ENCODE measurements at regions of chr6 and their contacts with region 1.

Region 1: GRCh38 chr6:28080631-28081485 is 490 bp downstream of the ZNF165 start:
- DNase-seq: peak; percentile 97
- H3K4me3 ChIP-seq: peak overlapping the region; percentile 62 to 78 (median 71)
- H3K27ac ChIP-seq: peak overlapping the region; percentile 86 to 93 (median 91)
- H3K4me1 ChIP-seq: peaks cover 0 to 14% (median 9%) of the 10 kb centered on the region in 4 donors
- H3K27me3 ChIP-seq: no peaks in the 10 kb centered on the region
- CTCF ChIP-seq: no peak
- EP300 ChIP-seq: peak in 1 of 4 donors; percentile 43
- POLR2A ChIP-seq: peak in 1 of 2 donors; percentile 41

Region 2: DNA sequence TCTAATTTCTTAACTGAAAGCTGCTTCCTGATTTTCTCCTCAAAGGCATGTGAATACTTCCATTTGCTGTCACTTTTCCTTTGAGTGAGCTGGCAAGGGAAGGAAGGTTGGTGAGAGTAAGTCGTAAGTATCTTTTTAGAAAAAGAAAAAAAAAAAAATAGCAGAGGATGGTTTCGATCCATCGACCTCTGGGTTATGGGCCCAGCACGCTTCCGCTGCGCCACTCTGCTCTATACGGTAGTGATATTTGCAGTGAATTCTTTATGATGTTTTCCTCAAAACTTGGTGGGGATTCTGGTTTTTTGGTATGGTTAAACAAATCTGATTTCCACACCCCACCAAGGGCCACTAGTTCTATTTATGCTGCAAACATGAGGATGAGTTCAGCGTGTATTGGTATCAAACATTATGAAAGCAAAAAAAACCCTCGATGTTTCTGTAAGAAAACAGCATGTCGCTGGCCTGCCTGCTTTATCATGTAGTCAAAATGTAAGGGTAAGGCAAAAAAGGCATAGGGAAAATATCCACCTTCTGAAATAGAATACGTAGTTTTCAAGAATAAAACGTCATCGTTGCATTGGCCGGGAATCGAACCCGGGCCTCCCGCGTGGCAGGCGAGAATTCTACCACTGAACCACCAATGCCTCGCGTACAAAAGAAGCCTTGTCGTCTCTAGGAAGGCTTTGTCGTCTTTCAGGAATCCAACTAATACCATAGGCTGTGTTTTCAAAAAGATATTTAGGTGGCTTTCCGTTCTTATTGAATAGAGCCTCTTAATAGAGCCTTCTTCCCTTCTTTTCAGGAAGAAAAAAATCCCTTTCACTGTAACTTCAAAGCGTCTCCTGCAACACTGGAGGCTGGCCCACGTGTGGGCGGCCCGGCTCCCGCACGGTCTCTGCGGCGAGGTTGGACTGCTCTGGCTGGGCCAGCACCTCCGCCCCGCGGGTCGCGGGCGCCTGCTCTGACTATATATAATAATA is 178.2 kb before region 1 on chr6:
- intact Hi-C with region 1: loop called (anchors 10 kb)
- DNase-seq: peak; percentile 90
- H3K4me3 ChIP-seq: peak overlapping the region; percentile 45 to 57 (median 51)
- H3K27ac ChIP-seq: peak overlapping the region; percentile 83 to 87 (median 86)
- H3K4me1 ChIP-seq: peaks cover 0 to 4% (median 0%) of the 10 kb centered on the region in 4 donors
- H3K27me3 ChIP-seq: no peaks in the 10 kb centered on the region
- CTCF ChIP-seq: no peak
- EP300 ChIP-seq: no peak
- POLR2A ChIP-seq: no peak

Region 3: DNA sequence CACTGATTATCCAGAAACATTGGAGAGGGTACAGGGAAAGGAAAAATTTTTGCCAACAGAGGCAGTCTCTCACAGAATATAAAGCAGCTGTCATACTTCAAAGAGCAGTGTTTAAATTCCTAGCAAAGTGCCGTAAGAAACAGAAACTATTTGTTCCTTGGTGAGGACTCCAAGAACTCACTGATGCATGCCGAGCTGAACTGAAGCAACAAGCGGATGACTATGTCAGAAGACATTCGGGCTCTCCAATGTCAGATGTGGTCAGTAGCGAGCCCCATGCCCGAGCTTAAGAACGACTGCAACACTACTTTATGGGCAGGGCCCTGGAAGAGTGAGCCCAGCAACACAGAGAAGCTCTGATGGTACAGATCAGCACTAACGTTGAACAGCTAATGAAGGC is 69.1 kb before region 1 on chr6:
- intact Hi-C with region 1: no loop called
- DNase-seq: no peak
- H3K4me3 ChIP-seq: no peak overlapping the region
- H3K27ac ChIP-seq: no peak overlapping the region
- H3K4me1 ChIP-seq: no peaks in the 10 kb centered on the region
- H3K27me3 ChIP-seq: no peaks in the 10 kb centered on the region
- CTCF ChIP-seq: no peak
- EP300 ChIP-seq: no peak
- POLR2A ChIP-seq: no peak

Region 4: GRCh38 chr6:28104392-28105244 is 23.8 kb after region 1 on chr6:
- intact Hi-C with region 1: loop called (anchors 2 kb)
- DNase-seq: peak; percentile 88
- H3K4me3 ChIP-seq: peak overlapping the region; percentile 66 to 80 (median 69)
- H3K27ac ChIP-seq: peak overlapping the region; percentile 84 to 89 (median 85)
- H3K4me1 ChIP-seq: peaks cover 0 to 5% (median 2%) of the 10 kb centered on the region in 4 donors
- H3K27me3 ChIP-seq: no peaks in the 10 kb centered on the region
- CTCF ChIP-seq: peak; percentile 30 to 85 (median 72)
- EP300 ChIP-seq: no peak
- POLR2A ChIP-seq: peak; percentile 37 to 63

Region 5: GRCh38 chr6:28124102-28124970 is 43.5 kb after region 1 on chr6 and contains the start of gene ZSCAN16:
- intact Hi-C with region 1: loop called (anchors 5 kb)
- DNase-seq: peak; percentile 89
- H3K4me3 ChIP-seq: peak within 1 kb of the TSS; percentile 56 to 63 (median 62)
- H3K27ac ChIP-seq: peak within 1 kb of the TSS; percentile 73 to 82 (median 76)
- H3K4me1 ChIP-seq: peaks cover 0 to 12% (median 5%) of the 10 kb centered on the region in 4 donors
- H3K27me3 ChIP-seq: no peaks in the 10 kb centered on the region
- CTCF ChIP-seq: no peak
- EP300 ChIP-seq: no peak
- POLR2A ChIP-seq: no peak
- total RNA-seq, gene ZSCAN16: 1.4 to 7.5 (median 6.8) TPM

Measured in sigmoid colon (tissue), 7 donors.